Adrenal gland (tissue), 19 donors: ENCODE measurements at regions of chr7 and their contacts with region 1.

Region 1: DNA sequence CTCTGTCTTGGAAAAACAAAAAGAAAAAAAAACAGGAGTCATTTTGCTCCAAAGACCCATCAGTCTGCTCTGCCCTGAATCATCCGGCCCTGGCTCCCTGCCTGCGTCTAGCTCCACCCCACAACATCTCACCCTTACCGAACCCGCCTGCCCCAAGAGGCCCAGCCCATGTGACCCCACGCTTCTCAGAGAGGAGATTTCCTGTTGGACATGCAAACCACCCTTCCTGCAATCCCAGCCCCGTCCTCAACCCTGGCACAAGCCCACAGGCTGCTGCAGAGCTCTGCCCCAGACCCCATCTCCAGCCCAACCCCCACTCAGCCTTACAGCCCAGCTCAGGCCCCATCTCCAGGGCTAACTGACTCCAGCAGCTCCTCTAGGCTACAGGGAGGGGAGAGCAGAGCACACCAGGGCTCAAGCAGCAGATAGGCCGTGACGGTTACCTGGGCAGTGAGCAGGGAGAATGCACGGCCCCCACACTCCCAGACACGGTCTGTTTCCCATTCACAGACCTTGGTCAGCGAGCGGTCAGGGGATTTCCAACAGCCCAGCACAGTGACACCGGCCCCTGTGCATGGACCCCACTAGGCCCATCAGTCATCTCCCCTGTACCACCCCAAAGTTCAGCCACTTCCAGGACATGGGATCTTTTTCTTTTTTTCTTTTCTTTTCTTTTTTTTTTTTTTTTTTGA is 69.9 kb upstream of the GTF2I start:
- DNase-seq: peak; percentile 91 to 98 (median 97)
- H3K4me3 ChIP-seq: peak overlapping the region in 1 of 4 donors; percentile 30
- H3K27ac ChIP-seq: peak overlapping the region; percentile 75 to 89 (median 84)
- H3K4me1 ChIP-seq: peaks cover 20% of the 10 kb centered on the region in 2 donors
- H3K27me3 ChIP-seq: no peaks in the 10 kb centered on the region
- CTCF ChIP-seq: peak in 3 of 6 experiments; percentile 3 to 23 (median 5)
- POLR2A ChIP-seq: peak in 1 of 2 donors; percentile 51

Region 2: DNA sequence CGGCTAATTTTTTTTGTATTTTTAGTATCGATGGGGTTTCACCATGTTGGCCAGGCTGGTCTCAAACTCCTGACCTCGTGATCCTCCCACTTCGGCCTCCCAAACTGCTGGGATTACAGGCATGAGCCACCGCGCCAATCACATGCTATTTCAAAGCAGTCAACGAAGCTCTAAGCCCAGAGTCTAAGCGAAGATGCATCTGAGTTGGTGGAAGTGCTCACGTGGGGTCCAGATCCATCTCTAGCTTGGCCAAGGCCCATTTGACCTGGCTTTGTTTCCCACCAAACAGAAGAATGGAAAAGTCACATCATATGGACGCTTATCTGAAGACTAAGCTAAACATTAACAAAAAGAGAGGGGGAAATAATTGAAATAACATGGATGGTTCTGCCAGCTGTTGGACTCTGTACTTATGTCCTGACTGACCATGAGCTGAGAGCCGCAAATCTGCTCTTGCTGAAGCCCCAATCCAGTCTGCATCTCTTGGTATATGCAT is 66.2 kb after region 1 on chr7:
- intact Hi-C with region 1: loop called in 1 of 2 experiments (anchors 10 kb)
- DNase-seq: no peak
- H3K4me3 ChIP-seq: no peak overlapping the region
- H3K27ac ChIP-seq: no peak overlapping the region
- H3K4me1 ChIP-seq: peaks cover 5 to 21% of the 10 kb centered on the region in 2 donors
- H3K27me3 ChIP-seq: no peaks in the 10 kb centered on the region
- CTCF ChIP-seq: no peak
- POLR2A ChIP-seq: no peak